GM12878 (cell line): ENCODE measurements at regions of chr1 and their contacts with region 1.

Region 1: GRCh38 chr1:95015076-95015475 is 57.7 kb downstream of the ALG14 start:
- DNase-seq: no peak
- ATAC-seq: no peak
- H3K4me3 ChIP-seq: no peak overlapping the region
- H3K27ac ChIP-seq: no peak overlapping the region
- H3K4me1 ChIP-seq: no peaks in the 10 kb centered on the region
- H3K27me3 ChIP-seq: no peaks in the 10 kb centered on the region
- CTCF ChIP-seq: no peak
- EP300 ChIP-seq: no peak
- POLR2A ChIP-seq: no peak
- RAD21 ChIP-seq: no peak

Region 2: GRCh38 chr1:94854458-94855306 is 160.4 kb before region 1 on chr1:
- CTCF ChIA-PET with region 1: interaction called, 4 read pairs
- POLR2A ChIA-PET with region 1: no interaction called
- RAD21 ChIA-PET with region 1: interaction called, 5 read pairs
- SMC1A ChIA-PET with region 1: no interaction called
- in situ Hi-C with region 1: no loop called
- intact Hi-C with region 1: loop called (anchors 1 kb)
- DNase-seq: peak; percentile 48
- ATAC-seq: peak; percentile 100
- H3K4me3 ChIP-seq: peak overlapping the region; percentile 53; the same call in 1 of the 2 replicates
- H3K27ac ChIP-seq: no peak overlapping the region
- H3K4me1 ChIP-seq: no peaks in the 10 kb centered on the region
- H3K27me3 ChIP-seq: no peaks in the 10 kb centered on the region; a peak in 1 of 4 replicates
- CTCF ChIP-seq: peak; percentile 87 to 93 (median 93)
- EP300 ChIP-seq: no peak
- POLR2A ChIP-seq: no peak
- RAD21 ChIP-seq: peak; percentile 87

Region 3: DNA sequence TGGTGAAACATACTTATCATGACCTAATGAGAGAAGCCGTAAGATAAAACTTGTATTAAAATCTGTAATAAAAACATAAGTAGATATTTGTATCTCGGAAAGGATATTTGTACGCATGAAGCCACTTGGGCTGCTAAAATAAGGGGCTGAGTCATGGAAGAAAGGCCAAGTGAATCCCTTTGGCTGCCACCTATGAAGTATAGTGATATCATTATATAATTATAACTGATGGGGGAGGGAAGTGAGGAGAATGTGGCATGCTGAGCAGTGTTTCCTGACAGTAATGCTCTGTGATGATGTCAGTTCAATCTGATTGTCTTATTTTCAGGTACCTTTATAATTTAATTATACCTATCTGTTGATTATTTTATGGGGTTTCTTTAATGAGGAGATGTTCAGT is 232.5 kb after region 1 on chr1:
- CTCF ChIA-PET with region 1: no interaction called
- POLR2A ChIA-PET with region 1: no interaction called
- RAD21 ChIA-PET with region 1: no interaction called
- SMC1A ChIA-PET with region 1: no interaction called
- in situ Hi-C with region 1: no loop called
- intact Hi-C with region 1: no loop called
- DNase-seq: no peak
- ATAC-seq: no peak
- H3K4me3 ChIP-seq: no peak overlapping the region
- H3K27ac ChIP-seq: no peak overlapping the region
- H3K4me1 ChIP-seq: no peaks in the 10 kb centered on the region
- H3K27me3 ChIP-seq: no peaks in the 10 kb centered on the region
- CTCF ChIP-seq: no peak
- EP300 ChIP-seq: no peak
- POLR2A ChIP-seq: no peak
- RAD21 ChIP-seq: no peak